ENCODE measurements at regions of chr1 and their contacts with region 1.

Region 1: DNA sequence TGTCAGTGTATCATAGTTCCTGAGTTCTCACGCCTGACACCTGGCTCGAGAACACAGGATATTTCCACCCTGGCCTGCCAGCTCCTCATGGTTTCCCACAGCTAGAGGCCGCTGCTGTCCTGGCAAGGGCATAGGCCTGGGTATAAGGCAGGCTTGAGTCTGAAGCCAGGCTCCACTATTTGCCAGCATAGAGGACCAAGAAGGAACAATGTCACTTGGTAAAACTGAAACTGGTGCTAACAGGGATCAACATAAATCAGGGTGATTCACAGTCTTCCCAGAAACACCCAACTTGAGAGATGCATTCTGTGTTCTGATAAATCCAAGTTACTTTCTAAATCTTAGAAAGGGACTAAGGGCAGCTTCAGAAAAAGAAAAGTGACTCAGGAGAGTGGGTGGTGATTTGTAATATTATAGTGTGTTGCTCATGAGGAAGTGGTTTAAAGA is 6.9 kb upstream of the S100A2 start:
- DNase-seq: peak in 4 of 5 donors; percentile 24 to 45 (median 30)
- H3K4me3 ChIP-seq: no peak overlapping the region
- H3K4me3 Mint-ChIP-seq: no peak overlapping the region
- H3K27ac ChIP-seq: no peak overlapping the region
- H3K27ac Mint-ChIP-seq: peak overlapping the region in 3 of 7 donors; percentile 15 to 41 (median 27)
- H3K4me1 ChIP-seq: peaks cover 14% of the 10 kb centered on the region
- H3K4me1 Mint-ChIP-seq: peaks cover 9 to 27% (median 12%) of the 10 kb centered on the region in 4 donors
- H3K27me3 ChIP-seq: no peaks in the 10 kb centered on the region
- H3K27me3 Mint-ChIP-seq: peaks cover 0 to 5% of the 10 kb centered on the region in 2 donors

Region 2: DNA sequence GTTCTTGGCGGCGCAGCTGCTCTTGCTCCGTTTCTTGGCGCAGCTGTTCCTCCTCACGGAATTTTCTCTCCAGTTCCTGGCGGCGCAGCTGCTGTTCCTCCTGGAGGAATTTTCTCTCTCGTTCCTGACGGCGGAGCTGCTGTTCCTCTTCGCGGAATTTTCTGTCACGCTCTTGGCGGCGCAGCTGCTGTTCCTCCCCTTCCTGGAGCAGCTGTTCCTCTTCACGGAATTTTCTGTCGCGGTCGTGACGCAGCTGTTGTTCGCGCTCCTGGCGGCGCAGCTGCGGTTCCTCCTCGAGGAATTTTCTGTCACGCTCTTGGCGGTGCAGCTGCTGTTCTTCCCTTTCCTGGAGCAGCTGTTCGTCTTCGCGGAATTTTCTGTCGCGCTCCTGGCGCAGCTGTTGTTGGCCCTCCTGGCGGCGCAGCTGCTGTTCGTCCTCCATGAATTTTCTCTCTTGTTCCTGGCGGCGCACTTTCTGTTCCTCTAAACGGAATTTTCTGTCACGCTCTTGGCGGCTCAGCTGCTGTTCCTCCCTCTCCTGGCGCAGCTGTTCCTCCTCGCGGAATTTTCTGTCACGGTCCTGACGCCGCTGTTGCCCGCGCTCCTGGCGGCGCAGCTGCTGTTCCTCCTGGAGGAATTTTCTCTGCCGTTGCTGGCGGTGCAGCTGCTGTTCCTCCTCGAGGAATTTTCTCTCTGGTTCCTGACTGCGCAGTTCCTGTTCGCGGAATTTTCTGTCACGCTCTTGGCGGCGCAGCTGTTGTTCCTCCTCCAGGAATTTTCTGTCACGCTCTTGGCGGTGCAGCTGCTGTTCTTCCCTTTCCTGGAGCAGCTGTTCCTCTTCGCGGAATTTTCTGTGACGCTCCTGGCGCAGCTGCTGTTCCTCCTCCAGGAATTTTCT is 1464.4 kb before region 1 on chr1:
- CTCF ChIA-PET with region 1: no interaction called
- POLR2A ChIA-PET with region 1: no interaction called
- intact Hi-C with region 1: no loop called
- DNase-seq: no peak
- H3K4me3 ChIP-seq: no peak overlapping the region
- H3K4me3 Mint-ChIP-seq: peak overlapping the region in 5 of 8 donors; percentile 27 to 64 (median 55)
- H3K27ac ChIP-seq: no peak overlapping the region
- H3K27ac Mint-ChIP-seq: peak overlapping the region in 2 of 7 donors; percentile 17 to 79
- H3K4me1 ChIP-seq: peaks cover 47% of the 10 kb centered on the region
- H3K4me1 Mint-ChIP-seq: peaks cover 0 to 13% (median 9%) of the 10 kb centered on the region in 4 donors
- H3K27me3 ChIP-seq: peaks cover 56% of the 10 kb centered on the region
- H3K27me3 Mint-ChIP-seq: peaks cover 16 to 28% of the 10 kb centered on the region in 2 donors

Region 3: GRCh38 chr1:153532769-153533599 is 39.6 kb before region 1 on chr1:
- CTCF ChIA-PET with region 1: interaction called, 225 read pairs
- POLR2A ChIA-PET with region 1: interaction called, 103 read pairs
- intact Hi-C with region 1: loop called (anchors 1 kb)
- DNase-seq: peak; percentile 76 to 82 (median 78)
- H3K4me3 ChIP-seq: peak overlapping the region; percentile 55 to 79
- H3K4me3 Mint-ChIP-seq: peak overlapping the region; percentile 88 to 98 (median 96)
- H3K27ac ChIP-seq: peak overlapping the region; percentile 92
- H3K27ac Mint-ChIP-seq: peak overlapping the region; percentile 88 to 98 (median 94)
- H3K4me1 ChIP-seq: peaks cover 62% of the 10 kb centered on the region
- H3K4me1 Mint-ChIP-seq: peaks cover 44 to 80% (median 57%) of the 10 kb centered on the region in 4 donors
- H3K27me3 ChIP-seq: no peaks in the 10 kb centered on the region
- H3K27me3 Mint-ChIP-seq: no peaks in the 10 kb centered on the region

Region 4: DNA sequence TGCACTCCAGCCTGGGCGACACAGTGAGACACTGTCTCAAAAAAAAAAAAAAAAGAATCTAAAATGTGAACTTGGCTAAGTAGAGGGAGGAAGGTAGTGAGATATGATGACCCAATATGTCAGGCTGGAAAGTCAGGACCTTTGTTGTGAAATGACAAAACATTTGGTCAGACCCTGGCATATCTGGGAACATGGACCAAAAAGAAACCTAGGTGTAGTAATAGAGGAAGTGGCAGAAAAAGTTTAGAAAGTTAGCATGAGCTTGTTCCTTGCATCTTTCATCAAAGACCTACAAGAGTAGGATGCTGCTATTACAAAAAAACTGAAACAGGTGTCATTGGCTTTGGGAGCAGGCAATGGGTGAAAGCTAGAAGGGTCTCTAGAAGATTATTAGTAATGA is 16.2 kb before region 1 on chr1:
- CTCF ChIA-PET with region 1: interaction called, 22 read pairs
- POLR2A ChIA-PET with region 1: interaction called, 3 read pairs
- intact Hi-C with region 1: no loop called
- DNase-seq: no peak
- H3K4me3 ChIP-seq: no peak overlapping the region
- H3K4me3 Mint-ChIP-seq: no peak overlapping the region
- H3K27ac ChIP-seq: no peak overlapping the region
- H3K27ac Mint-ChIP-seq: peak overlapping the region in 2 of 7 donors; percentile 46 to 61
- H3K4me1 ChIP-seq: no peaks in the 10 kb centered on the region
- H3K4me1 Mint-ChIP-seq: peaks cover 0 to 1% (median 0%) of the 10 kb centered on the region in 4 donors
- H3K27me3 ChIP-seq: no peaks in the 10 kb centered on the region
- H3K27me3 Mint-ChIP-seq: no peaks in the 10 kb centered on the region

Region 5: GRCh38 chr1:153617675-153618074 is 45.1 kb after region 1 on chr1:
- CTCF ChIA-PET with region 1: interaction called, 38 read pairs
- POLR2A ChIA-PET with region 1: no interaction called
- intact Hi-C with region 1: loop called (anchors 5 kb)
- DNase-seq: peak in 3 of 5 donors; percentile 50 to 63 (median 55)
- H3K4me3 ChIP-seq: no peak overlapping the region
- H3K4me3 Mint-ChIP-seq: no peak overlapping the region
- H3K27ac ChIP-seq: no peak overlapping the region
- H3K27ac Mint-ChIP-seq: peak overlapping the region in 1 of 7 donors; percentile 4
- H3K4me1 ChIP-seq: no peaks in the 10 kb centered on the region
- H3K4me1 Mint-ChIP-seq: peaks cover 0 to 5% (median 0%) of the 10 kb centered on the region in 4 donors
- H3K27me3 ChIP-seq: no peaks in the 10 kb centered on the region
- H3K27me3 Mint-ChIP-seq: peaks cover 0 to 1% of the 10 kb centered on the region in 2 donors

Region 6: GRCh38 chr1:155195201-155196102 is 1622.9 kb after region 1 on chr1:
- CTCF ChIA-PET with region 1: no interaction called
- POLR2A ChIA-PET with region 1: no interaction called
- intact Hi-C with region 1: no loop called
- DNase-seq: peak in 1 of 5 donors; percentile 24
- H3K4me3 ChIP-seq: no peak overlapping the region
- H3K4me3 Mint-ChIP-seq: peak overlapping the region; percentile 29 to 86 (median 74)
- H3K27ac ChIP-seq: peak overlapping the region; percentile 67
- H3K27ac Mint-ChIP-seq: peak overlapping the region; percentile 90 to 95 (median 92)
- H3K4me1 ChIP-seq: peaks cover 27% of the 10 kb centered on the region
- H3K4me1 Mint-ChIP-seq: peaks cover 19 to 38% (median 24%) of the 10 kb centered on the region in 4 donors
- H3K27me3 ChIP-seq: no peaks in the 10 kb centered on the region
- H3K27me3 Mint-ChIP-seq: no peaks in the 10 kb centered on the region

Measured in CD4-positive, alpha-beta memory T cell (primary cell).